GM13977 (cell line): ENCODE measurements at regions of chr1 and their contacts with region 1.

Region 1: DNA sequence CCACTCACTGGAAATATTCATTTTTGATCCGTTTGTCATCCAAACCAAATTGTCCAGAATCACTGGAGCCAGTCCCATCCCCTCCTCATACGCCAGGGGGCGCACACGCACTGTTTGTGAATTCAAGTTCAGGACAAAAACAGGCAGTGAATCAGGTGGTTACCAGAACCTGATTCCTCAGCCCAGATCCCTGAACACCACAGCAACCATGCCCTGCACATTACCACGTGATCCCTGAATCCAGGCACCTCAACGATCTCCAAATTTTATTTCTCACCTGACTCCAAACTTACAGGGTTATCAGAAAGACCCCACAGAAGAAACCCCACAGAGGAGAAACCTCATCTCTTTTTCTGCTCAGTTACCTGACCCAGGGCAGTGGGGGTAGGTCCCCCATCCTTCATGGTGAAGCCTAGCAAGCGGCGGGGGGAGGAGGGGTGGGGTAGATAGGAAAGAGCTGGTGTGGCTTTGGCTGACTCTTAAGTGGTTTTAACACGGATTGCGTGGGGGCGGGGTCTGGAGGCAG is 1.4 kb upstream of the PTPRF start:
- DNase-seq: peak; percentile 88
- CTCF ChIP-seq: peak; percentile 95

Region 2: DNA sequence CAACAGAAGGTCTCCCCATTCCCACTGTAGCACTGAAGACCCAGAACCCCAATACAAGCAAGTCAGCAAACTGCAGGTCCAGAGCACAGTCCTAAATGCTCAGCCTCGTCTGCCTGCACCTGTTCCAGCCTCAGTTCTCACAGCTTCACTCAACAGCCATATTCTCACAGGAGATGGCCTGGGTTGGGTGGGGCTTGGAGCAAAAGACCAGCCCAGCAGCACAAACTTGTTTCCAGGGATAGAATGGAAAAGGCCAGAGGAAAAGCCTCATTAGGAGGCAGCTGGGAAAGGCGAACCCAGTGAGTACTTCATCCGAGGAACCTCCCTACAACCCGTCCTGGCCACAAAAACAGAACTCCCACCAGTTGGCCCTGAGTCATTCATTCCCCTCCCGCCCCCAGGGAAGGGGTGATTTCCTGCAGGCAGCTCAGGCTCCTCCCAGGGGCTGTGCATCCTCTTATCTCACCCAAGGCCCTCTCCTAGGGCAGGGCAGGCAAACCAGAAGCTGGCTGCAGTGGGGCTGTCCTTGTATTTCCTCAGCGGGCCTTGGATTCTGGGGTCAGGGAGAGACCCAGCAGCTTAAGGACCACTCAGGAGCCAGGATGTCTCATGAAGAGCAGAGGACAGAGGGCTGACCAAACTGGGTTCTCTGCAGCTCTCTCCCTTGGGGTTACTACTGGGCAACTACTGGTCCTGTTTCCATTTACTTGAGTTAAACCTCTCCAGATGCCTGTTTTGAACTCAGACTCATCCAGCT is 199.1 kb before region 1 on chr1:
- in situ Hi-C with region 1: no loop called
- DNase-seq: peak; percentile 61
- CTCF ChIP-seq: no peak

Region 3: DNA sequence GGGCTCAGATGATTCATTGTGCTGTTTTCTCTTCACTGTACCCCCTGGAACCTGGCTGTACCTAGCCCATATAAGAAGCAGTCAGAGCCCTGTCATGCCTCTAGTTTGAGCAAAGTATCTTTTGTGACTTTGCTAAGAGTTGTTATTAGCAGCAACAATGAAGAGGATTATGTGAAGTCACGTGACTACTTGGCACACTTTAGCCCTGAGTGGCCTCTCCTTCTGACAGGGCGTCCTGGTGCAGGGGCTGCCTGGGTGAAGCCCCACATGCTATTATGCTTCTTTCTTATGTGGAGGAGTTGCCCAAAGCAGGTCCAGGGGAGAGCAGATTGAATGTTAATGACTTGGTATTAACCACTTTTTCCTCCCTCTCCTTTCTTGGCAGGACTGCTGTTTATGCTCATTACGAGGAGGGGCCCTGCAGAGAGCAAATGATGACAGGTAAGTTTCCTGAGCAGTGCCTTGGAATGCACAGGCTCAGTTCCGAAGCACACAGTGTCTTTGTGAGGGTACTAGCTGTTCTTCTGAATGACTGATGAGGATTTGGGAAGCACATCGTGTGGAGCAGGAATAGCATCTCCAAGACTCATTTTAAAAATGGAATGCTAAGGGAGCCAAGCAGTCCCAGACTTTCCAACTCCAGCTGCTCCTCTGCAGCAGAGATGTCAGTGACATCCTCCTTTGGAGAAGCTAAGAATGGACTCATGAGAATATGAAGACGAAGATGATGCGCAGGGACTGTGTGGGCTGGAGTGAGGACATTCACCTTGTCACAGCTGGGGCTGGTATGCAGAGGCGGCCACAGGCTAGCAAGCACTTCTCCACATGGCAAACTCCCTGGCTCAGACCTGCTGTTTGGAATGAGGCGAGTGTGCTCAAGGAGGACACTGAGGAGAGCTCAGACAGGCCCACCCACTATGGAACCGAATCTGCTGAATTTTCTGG is 162.9 kb after region 1 on chr1:
- in situ Hi-C with region 1: no loop called
- DNase-seq: no peak
- CTCF ChIP-seq: no peak

Region 4: DNA sequence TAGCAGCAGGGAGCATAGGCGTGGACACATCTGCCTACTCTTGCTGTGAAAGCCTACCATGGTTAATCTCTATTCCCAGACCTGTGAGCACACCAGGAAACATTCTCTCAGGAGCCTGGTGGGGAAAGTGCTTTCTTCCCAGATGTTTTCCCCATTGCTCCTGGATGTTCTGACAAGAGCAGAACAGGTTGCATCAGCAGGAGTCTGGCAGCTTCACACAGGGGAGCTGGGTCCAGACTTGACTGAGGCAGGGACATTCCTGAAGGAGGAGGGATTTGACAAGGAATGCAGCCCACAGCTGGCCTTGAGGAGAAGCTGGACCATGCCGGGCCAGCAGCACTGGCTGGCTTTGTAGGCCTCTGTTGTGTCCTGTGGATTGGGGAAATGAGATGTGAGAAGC is 383.3 kb after region 1 on chr1:
- in situ Hi-C with region 1: no loop called
- DNase-seq: no peak
- CTCF ChIP-seq: no peak

Region 5: DNA sequence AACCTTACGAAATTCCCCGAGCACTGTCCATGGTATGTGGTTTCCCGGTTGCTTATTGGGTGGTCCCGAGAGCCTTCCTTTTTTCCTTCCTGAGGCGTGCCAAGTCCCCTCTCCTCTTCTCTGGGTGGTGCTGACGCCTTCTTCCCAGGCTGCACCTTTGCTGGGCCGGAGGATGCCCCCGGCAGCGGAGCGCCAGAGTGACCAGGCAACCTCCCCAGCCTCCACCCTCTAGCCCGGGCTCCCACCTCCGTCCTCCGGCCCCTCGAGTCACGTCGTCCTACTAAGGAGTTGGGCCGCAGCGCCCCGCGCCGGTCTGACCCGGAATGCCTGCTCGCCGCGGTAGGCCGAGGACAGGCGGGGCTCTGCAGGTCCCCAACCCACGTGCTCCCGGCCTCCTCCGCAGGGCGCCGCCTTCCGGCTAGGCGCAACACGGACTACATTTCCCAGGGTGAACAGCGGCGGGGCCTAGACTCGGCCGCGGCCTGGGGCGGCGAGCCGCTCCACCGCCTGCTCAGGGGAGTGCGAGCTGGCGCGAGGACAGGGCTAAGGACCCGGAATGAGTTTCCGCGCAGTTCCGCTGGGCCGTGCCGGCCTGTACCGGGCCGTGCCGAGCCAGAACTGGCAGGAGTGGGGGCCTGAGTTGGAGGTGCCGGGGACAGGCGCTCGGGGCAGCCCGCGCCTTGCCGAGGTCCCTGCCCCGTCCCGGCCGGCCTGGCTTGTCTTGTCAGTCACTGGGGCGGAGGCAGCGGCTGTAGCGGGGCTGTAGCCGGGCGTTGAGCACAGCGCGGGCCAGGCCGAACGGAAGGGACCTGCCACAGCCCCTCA is 417.2 kb after region 1 on chr1 and contains the start of gene IPO13:
- in situ Hi-C with region 1: loop called (anchors 25 kb)
- DNase-seq: peak; percentile 99
- CTCF ChIP-seq: peak; percentile 90

Region 6: GRCh38 chr1:44029906-44030604 is 500.8 kb after region 1 on chr1:
- in situ Hi-C with region 1: loop called (anchors 25 kb)
- DNase-seq: peak; percentile 93
- CTCF ChIP-seq: no peak